ENCODE measurements at regions of chr3 and their contacts with region 1.

Region 1: GRCh38 chr3:190224863-190225692 is 97.2 kb downstream of the CLDN1 start:
- DNase-seq: no peak
- H3K4me3 ChIP-seq: no peak overlapping the region
- H3K27ac ChIP-seq: no peak overlapping the region
- H3K4me1 ChIP-seq: no peaks in the 10 kb centered on the region
- H3K27me3 ChIP-seq: no peaks in the 10 kb centered on the region
- CTCF ChIP-seq: peak in 2 of 4 experiments; percentile 26 to 29
- EP300 ChIP-seq: no peak
- POLR2A ChIP-seq: no peak

Region 2: DNA sequence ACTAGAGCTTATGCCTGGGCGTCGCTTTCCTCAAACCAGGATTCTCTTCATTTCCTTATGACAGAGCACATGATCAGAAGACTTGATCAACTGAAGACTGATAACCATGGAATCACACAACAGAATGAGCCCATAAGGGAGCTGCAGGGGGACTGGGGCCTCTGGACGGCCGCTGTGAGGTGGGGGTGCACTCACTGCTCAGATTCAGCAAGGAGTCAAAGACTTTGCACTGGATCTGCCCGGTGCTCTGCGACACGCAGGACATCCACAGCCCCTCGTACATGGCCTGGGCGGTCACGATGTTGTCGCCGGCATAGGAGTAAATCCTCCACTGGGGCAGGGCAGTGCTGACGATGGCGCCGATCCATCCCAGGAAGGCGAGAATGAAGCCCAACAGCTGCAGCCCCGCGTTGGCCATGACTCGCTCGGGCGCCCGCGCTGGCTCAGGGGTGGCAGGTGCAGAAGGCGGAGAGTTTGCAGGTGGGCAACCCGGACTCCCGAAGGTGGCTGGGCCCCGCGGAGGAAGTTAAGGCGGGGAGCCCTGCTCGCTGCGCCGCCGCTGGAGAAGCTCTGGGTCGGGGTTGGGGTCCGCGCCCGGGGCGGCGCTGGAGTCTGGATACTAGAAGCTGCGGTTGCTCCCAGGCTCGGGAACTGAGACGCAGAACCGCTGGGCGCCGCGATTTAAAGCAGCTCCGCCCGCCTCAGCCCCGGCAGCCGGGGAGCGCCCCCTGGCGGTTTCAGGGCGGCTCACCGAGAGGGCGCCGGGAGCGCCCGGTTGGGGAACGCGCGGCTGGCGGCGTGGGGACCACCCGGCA is 96.9 kb after region 1 on chr3 and contains the start of gene CLDN1:
- intact Hi-C with region 1: loop called (anchors 2 kb)
- DNase-seq: peak; percentile 88
- H3K4me3 ChIP-seq: peak within 1 kb of the TSS; percentile 25 to 55 (median 50)
- H3K27ac ChIP-seq: no peak within 1 kb of the TSS
- H3K4me1 ChIP-seq: peaks cover 0 to 22% (median 16%) of the 10 kb centered on the region in 4 donors
- H3K27me3 ChIP-seq: peaks cover 0 to 14% (median 9%) of the 10 kb centered on the region in 3 donors
- CTCF ChIP-seq: peak; percentile 59 to 99 (median 82)
- EP300 ChIP-seq: no peak
- POLR2A ChIP-seq: no peak
- total RNA-seq, gene CLDN1: 0.27 to 0.49 (median 0.32) TPM